Breast epithelium (tissue), 4 donors: ENCODE measurements at regions of chr1 and their contacts with region 1.

Region 1: DNA sequence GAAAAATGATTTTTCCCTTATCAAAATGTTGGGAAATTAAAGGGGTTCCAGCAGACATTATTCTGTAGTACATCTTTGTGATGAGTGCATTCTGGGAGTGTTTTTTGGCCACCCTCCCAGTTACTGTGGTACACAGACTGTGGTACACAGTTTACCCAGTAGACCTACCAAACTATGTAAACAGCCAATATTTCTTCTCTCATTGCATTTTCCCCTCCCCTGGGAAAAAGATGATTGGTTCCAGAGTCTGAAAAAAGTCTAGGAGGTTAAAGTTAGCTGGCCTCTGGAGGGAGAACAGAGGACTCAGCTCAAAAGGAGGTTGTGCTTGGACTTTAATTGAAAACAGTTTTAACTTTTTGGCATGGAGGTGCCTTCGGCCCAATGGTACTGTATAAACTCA is 42.5 kb downstream of the PGM1 start:
- DNase-seq: no peak
- H3K4me3 ChIP-seq: no peak overlapping the region
- H3K27ac ChIP-seq: no peak overlapping the region
- H3K4me1 ChIP-seq: no peaks in the 10 kb centered on the region
- H3K27me3 ChIP-seq: no peaks in the 10 kb centered on the region
- CTCF ChIP-seq: no peak
- POLR2A ChIP-seq: no peak

Region 2: DNA sequence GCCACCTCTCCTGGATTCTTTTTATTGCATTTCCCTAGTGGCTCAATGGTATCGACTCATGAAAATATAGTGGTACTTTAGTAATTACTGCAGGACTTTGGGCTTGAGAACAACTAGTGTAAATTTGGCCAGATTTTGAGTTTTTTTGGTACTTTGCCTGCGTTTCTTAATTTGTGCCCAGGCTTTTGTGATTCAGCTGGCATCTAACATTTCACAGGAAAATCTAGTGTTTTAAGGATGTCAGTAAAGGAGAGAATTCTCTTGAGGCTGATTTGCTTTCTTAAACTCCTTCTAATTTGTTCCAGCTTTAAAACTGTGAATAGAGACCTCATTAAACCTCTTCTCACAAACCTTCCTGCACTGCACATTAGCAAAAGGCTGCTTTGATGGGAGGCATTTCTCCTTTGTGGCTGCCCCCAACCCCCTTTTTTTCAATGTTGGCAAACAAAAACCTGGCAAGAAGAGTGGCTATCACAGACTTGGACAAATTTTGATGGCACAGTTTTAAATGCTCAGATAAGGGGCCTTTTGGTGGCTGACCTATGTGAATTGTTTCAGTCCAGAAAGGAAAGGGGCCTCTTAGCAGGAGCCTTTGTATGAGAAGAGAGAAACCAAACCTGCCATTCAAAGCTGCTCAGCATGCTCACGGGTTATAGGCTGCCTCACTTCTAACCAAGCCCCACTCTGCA is 995.8 kb after region 1 on chr1:
- intact Hi-C with region 1: loop called (anchors 5 kb)
- DNase-seq: no peak
- H3K4me3 ChIP-seq: no peak overlapping the region
- H3K27ac ChIP-seq: no peak overlapping the region
- H3K4me1 ChIP-seq: no peaks in the 10 kb centered on the region
- H3K27me3 ChIP-seq: no peaks in the 10 kb centered on the region
- CTCF ChIP-seq: no peak
- POLR2A ChIP-seq: no peak

Region 3: GRCh38 chr1:65357291-65357960 is 1721.7 kb after region 1 on chr1:
- intact Hi-C with region 1: loop called (anchors 5 kb)
- DNase-seq: no peak
- H3K4me3 ChIP-seq: no peak overlapping the region
- H3K27ac ChIP-seq: no peak overlapping the region
- H3K4me1 ChIP-seq: no peaks in the 10 kb centered on the region
- H3K27me3 ChIP-seq: no peaks in the 10 kb centered on the region
- CTCF ChIP-seq: no peak
- POLR2A ChIP-seq: no peak